A673 (cell line): ENCODE measurements at regions of chr17 and their contacts with region 1.

Region 1: GRCh38 chr17:45948881-45949624 is 50.0 kb upstream of the STH start:
- DNase-seq: peak; percentile 68
- H3K4me3 ChIP-seq: no peak overlapping the region
- H3K27ac ChIP-seq: peak overlapping the region; percentile 57
- H3K4me1 ChIP-seq: peaks cover 5% of the 10 kb centered on the region
- H3K27me3 ChIP-seq: no peaks in the 10 kb centered on the region
- CTCF ChIP-seq: peak; percentile 60

Region 2: DNA sequence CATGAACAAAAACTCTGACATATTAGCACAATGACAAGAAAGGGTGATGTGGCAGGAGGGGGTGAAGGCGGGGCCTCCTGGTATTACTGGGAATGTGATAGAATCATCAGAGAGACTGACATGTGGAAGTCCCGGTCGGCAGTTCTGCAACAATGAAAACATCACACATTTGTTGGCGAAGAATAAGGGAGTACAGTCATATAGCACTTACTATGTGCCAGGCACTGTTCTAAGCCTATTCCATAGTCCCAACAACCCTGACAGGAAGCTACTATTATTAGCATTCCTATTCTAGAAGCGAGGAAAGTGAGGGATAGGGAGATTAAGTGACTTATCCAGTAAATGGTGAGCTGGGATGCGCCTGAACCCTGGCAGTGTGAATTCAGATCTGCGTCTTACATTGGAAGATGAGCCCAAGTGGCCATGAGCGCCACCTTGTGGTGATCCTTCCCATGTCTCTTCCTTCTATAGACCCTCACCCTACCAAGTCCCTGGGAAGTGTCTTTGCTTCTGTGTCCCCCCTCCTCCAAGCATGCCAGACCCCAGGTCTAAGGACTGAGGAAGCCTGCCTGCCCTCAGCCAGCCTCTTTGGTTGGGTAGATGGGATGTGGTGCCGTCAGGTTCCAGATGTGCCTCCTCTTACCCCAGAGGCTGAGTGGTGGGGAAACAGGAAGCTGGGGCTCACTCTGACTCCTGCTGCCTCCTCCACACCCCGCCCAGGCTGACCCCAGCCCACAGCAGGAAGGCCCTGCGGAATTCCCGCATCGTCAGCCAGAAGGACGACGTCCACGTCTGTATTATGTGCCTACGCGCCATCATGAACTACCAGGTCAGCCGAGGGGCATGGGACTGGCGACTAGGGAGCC is 713.4 kb before region 1 on chr17:
- CTCF ChIA-PET with region 1: no interaction called
- POLR2A ChIA-PET with region 1: no interaction called
- intact Hi-C with region 1: no loop called
- DNase-seq: peak; percentile 58
- H3K4me3 ChIP-seq: no peak overlapping the region
- H3K27ac ChIP-seq: no peak overlapping the region
- H3K4me1 ChIP-seq: no peaks in the 10 kb centered on the region
- H3K27me3 ChIP-seq: no peaks in the 10 kb centered on the region
- CTCF ChIP-seq: peak; percentile 68

Region 3: GRCh38 chr17:45895304-45895968 is 53.6 kb before region 1 on chr17:
- CTCF ChIA-PET with region 1: interaction called, 4 read pairs
- POLR2A ChIA-PET with region 1: no interaction called
- intact Hi-C with region 1: loop called (anchors 5 kb)
- DNase-seq: peak; percentile 22
- H3K4me3 ChIP-seq: peak overlapping the region; percentile 60
- H3K27ac ChIP-seq: no peak overlapping the region
- H3K4me1 ChIP-seq: no peaks in the 10 kb centered on the region
- H3K27me3 ChIP-seq: peaks cover 25% of the 10 kb centered on the region
- CTCF ChIP-seq: 0 out of 2 replicates have a peak, but pooled peaks have one; percentile 17

Region 4: DNA sequence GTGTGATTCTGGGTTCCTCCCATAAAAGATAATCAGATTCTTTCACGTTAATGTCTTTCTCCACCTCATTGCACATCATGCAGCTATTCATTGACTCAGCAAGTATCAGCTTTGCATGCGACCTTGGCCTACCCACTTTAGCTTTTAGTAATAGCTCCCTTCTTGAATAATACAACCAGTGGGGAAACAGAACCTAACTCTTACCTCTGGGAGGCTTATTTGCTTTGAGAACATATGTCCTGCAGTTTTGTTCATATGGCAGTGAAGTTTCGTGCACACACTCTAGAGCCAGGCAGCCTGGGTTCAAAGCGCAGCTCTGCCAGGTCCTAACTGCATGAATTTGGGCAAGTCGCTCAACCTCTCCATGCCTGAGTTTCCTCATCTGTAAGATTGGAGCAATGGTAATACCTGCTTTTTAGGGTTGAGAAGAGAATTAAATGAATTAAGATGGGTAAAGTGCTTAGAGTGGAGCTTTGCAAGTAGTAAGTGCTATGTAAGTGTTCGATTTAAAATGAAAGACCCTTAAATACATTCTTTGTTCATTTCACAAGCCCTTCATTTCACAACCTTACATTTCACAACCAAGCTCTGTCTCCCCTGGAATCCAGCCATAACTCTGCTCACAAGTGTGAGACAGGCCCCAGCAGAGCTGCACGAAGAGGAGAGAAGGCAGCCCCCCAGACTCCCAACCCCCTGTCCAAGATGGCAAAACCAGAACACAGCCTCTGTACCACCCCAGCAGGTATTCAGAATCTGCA is 25.4 kb before region 1 on chr17:
- CTCF ChIA-PET with region 1: no interaction called
- POLR2A ChIA-PET with region 1: no interaction called
- intact Hi-C with region 1: no loop called
- DNase-seq: peak; percentile 26
- H3K4me3 ChIP-seq: no peak overlapping the region
- H3K27ac ChIP-seq: no peak overlapping the region
- H3K4me1 ChIP-seq: no peaks in the 10 kb centered on the region
- H3K27me3 ChIP-seq: no peaks in the 10 kb centered on the region
- CTCF ChIP-seq: no peak